Calu3 (cell line): ENCODE measurements at regions of chr6 and their contacts with region 1.

Region 1: DNA sequence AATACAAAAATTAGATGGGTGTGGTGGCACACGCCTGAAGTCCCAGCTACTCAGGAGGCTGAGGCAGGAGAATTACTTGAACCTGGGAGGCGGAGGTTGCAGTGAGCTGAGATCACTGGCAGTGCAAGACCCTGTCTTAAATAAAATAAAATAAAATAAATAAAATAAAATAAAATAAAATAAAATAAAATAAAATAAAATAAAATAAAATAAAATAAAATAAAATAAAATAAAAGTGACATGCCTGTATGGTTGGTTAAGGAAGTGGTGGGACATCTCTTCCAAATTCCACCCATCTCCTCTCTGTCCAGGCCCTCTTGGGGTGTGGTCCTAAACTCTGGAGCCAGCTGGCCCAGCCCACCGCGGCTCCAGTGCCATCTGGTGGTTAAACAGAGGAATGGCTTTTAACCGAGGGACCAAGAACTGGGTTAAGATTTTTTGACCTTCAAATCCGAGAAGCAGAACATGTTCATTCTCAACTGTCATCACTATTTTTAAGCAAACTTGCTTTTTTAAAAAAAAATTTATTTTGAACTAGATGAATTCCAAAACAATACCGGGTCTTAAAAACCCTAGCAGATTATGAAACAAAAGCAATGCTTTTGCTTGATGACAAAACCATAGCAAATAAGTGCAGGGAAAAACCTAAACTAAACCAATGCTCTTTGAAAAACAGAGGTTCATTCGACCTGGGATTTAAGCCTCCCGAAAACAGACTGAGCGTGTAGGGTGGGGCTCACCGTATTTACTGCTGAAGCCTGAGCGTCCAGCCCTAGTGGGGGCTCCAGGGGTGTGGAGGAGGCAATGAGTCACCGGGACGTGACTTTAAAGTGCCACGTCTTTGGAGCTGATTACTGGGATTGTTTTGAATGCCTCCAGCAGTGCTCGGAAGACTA is 68.8 kb downstream of the CDC5L start:
- DNase-seq: peak; percentile 70
- H3K4me3 Mint-ChIP-seq: peak overlapping the region; percentile 32
- H3K27ac Mint-ChIP-seq: peak overlapping the region; percentile 1
- H3K4me1 Mint-ChIP-seq: peaks cover 15% of the 10 kb centered on the region
- H3K27me3 Mint-ChIP-seq: peaks cover 22% of the 10 kb centered on the region
- CTCF ChIP-seq: peak; percentile 97

Region 2: GRCh38 chr6:44431118-44431725 is 25.1 kb before region 1 on chr6:
- CTCF ChIA-PET with region 1: interaction called, 6 read pairs
- intact Hi-C with region 1: loop called (anchors 1 kb)
- DNase-seq: peak; percentile 70
- H3K4me3 Mint-ChIP-seq: no peak overlapping the region
- H3K27ac Mint-ChIP-seq: no peak overlapping the region
- H3K4me1 Mint-ChIP-seq: peaks cover 12% of the 10 kb centered on the region
- H3K27me3 Mint-ChIP-seq: no peaks in the 10 kb centered on the region
- CTCF ChIP-seq: peak; percentile 88

Region 3: DNA sequence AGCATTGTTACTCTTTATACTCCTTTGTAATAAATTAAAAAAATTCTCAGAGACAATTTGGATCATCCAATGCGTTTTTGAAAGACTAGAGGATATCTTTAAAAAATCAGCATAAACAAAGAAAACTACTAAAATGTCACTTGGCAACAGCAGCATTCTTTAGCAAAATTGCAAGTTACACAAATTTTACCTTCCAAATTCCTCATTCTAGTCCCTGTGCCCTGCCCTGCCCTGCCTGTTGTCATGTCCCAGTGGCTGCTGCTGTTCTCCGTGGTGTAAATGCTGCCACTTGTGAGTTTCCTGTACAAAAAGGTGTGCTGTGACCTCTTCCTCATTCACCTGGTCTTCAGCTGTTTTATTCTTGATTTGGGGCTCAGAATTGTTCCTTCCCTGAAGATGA is 14.4 kb after region 1 on chr6:
- CTCF ChIA-PET with region 1: interaction called, 14 read pairs
- intact Hi-C with region 1: no loop called
- DNase-seq: no peak
- H3K4me3 Mint-ChIP-seq: no peak overlapping the region
- H3K27ac Mint-ChIP-seq: no peak overlapping the region
- H3K4me1 Mint-ChIP-seq: peaks cover 21% of the 10 kb centered on the region
- H3K27me3 Mint-ChIP-seq: no peaks in the 10 kb centered on the region
- CTCF ChIP-seq: no peak